Ascending aorta (tissue), 2 donors: ENCODE measurements at regions of chr16 and their contacts with region 1.

Region 1: GRCh38 chr16:10964039-10964890 is 19.9 kb downstream of the CLEC16A start:
- DNase-seq: peak; percentile 46 to 89
- H3K4me3 ChIP-seq: peak overlapping the region in 1 of 2 donors; percentile 29
- H3K27ac ChIP-seq: peak overlapping the region in 1 of 2 donors; percentile 64
- H3K4me1 ChIP-seq: peaks cover 0 to 14% of the 10 kb centered on the region in 2 donors
- H3K27me3 ChIP-seq: no peaks in the 10 kb centered on the region
- CTCF ChIP-seq: peak; percentile 92 to 94 (median 93)

Region 2: GRCh38 chr16:10828851-10829731 is 135.2 kb before region 1 on chr16:
- intact Hi-C with region 1: no loop called
- DNase-seq: peak; percentile 79 to 98
- H3K4me3 ChIP-seq: peak overlapping the region in 1 of 2 donors; percentile 30
- H3K27ac ChIP-seq: peak overlapping the region; percentile 93 to 99
- H3K4me1 ChIP-seq: peaks cover 10 to 25% of the 10 kb centered on the region in 2 donors
- H3K27me3 ChIP-seq: no peaks in the 10 kb centered on the region
- CTCF ChIP-seq: no peak

Region 3: DNA sequence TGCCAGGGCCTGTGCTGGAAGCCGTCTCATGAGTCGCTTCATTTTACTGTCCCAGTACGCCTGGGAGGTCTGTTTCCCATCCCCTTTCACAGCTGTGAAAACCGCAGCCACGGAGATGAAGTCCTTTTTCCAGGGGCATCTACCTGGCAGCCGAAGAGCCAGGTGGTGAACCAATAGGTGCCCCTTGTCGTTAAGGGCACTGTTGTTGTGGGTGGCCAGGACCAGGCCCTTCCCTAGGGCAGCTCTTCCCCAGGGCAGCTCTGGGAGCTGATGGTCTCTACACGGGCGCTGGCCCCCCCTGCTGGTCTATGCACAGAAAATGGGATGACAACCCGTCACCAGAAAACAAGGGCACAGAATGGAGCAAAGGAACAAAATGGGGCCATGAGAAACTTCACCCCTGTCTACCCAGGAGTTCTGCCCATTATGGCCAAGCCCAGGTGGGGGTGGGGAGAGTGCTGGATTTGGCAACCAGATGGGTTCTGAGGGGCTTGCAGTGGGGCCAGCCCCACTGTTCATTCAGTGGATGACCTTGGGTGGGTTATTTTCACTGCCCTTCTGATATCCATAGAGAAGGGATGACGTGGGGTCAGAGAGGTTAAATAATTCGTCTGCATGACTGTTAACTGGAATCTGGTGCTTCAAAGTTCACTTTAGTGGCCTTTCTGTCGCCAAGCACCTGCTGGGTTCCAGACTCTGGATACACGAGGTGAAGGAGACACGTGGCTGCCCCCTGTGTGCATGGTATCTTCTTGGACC is 392.5 kb after region 1 on chr16:
- intact Hi-C with region 1: loop called (anchors 5 kb)
- DNase-seq: no peak
- H3K4me3 ChIP-seq: no peak overlapping the region
- H3K27ac ChIP-seq: peak overlapping the region; percentile 73 to 75
- H3K4me1 ChIP-seq: peaks cover 3 to 12% of the 10 kb centered on the region in 2 donors
- H3K27me3 ChIP-seq: no peaks in the 10 kb centered on the region
- CTCF ChIP-seq: peak; percentile 24 to 51 (median 42)